ENCODE measurements at regions of chr22 and their contacts with region 1.

Region 1: DNA sequence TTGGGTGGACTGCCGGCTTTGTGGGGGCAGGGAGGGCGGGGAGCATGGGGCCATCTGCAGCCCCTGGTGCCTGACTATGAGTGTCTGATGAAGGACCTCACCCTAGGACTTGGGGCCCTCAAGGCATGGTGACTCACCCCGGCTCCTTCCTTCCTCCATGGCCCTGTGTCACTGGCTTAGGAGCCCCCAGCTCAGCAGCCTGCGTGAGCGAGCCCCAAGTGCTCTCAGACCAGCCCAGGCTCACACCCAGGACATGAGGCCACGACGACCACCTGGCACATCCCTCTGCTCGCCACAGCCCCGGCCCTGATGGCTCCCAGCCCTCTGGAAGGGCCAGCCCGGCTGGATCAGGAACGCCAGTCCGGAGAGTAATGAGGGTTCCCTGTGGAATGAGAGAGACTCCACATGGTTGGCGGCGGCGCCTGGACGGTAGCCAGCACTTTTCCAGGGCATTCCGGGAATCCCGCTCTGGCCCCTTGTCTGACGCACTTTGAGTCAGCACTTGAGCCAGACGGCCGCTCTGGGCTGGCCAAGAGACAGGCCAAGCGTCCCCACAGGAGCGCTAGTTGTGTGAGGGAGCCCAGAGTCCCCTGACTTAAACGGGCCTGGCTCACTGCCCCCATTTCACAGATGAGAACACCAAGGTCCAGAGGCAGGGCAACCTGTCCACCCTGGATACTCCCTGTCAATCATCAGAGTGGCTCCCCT is 50.7 kb upstream of the SHISAL1 start:
- DNase-seq: peak; percentile 87 to 97
- H3K4me3 ChIP-seq: peak overlapping the region in 1 of 2 donors; percentile 23
- H3K27ac ChIP-seq: peak overlapping the region; percentile 70 to 71
- H3K4me1 ChIP-seq: peaks cover 8 to 66% (median 63%) of the 10 kb centered on the region in 4 donors
- H3K27me3 ChIP-seq: no peaks in the 10 kb centered on the region
- CTCF ChIP-seq: no peak

Region 2: DNA sequence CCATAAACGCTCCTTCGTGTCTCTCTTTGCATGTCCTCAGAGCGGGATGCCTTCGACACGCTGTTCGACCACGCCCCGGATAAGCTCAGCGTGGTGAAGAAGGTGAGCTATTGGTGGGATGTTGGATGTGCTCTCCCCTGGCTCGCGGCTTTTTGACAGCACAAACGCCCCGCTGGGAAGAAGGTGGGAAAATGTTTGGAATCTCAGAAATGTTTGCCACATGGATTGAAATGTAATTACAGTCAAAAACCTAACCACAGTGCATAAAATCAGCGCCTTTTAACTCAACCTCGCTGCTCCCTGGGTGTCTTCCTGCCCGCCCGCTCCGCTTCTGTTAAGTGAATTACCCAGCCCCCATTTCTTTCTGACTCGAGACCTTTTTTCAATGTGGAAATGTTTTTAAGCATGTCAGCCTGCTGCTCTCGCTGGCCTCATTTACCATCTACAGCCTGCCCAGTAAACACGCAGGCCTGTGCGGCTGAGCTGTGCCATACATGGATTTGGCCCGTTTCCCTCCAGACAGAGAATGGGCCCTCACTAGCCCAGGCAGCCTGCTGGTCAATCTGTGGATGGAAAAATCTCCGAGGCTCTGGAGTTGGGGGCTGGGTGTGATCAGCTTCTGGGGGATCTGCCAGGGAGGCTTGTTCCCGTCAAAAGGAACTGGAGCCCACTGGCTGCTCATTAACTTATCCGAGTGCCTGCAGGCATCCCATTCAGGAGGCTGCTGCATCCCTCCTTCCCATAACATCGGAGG is 215.4 kb before region 1 on chr22:
- intact Hi-C with region 1: loop called (anchors 5 kb)
- DNase-seq: no peak
- H3K4me3 ChIP-seq: no peak overlapping the region
- H3K27ac ChIP-seq: no peak overlapping the region
- H3K4me1 ChIP-seq: peaks cover 0 to 12% (median 2%) of the 10 kb centered on the region in 4 donors
- H3K27me3 ChIP-seq: peaks cover 0 to 18% of the 10 kb centered on the region in 2 donors
- CTCF ChIP-seq: no peak

Region 3: GRCh38 chr22:44242946-44243724 is 120.3 kb before region 1 on chr22:
- intact Hi-C with region 1: no loop called
- DNase-seq: no peak
- H3K4me3 ChIP-seq: no peak overlapping the region
- H3K27ac ChIP-seq: no peak overlapping the region
- H3K4me1 ChIP-seq: no peaks in the 10 kb centered on the region
- H3K27me3 ChIP-seq: peaks cover 0 to 6% of the 10 kb centered on the region in 2 donors
- CTCF ChIP-seq: no peak

Region 4: DNA sequence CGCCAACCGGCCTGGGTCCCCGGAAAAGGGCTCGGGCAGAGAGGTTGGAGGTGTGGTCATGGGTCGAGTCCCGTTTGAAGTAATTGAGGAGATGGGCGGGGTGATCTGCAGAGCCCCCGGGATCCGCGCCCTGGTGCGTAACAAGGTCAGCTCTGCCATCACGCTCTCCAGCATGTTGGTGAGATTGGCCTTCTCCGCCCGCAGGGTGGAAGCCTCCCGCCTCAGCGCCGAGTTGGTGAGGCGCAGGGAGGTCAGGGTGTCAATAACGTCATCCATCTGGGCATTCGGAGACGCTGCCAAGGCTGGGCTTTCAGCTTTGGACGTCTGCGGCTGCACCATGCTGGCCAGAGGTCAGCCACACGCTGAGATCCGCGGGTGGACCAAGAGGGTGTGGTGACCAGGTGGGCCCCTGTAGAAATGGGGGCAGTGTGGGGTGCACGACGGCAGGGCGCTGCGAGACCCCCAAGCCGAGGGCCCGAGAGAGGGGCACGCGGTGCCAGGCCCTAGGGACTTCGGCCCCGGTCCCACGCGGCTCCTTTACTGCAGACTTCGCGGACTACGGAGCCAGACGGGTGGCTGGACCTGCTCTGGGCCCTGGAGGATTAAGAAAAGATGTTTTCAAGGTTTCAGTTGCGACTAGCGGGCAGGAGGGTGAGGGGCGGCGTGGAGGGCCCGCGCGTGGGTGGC is 133.9 kb after region 1 on chr22:
- intact Hi-C with region 1: loop called (anchors 2 kb)
- DNase-seq: no peak
- H3K4me3 ChIP-seq: peak overlapping the region; percentile 77 to 94
- H3K27ac ChIP-seq: peak overlapping the region; percentile 60 to 75
- H3K4me1 ChIP-seq: peaks cover 0 to 21% (median 9%) of the 10 kb centered on the region in 4 donors
- H3K27me3 ChIP-seq: peaks cover 0 to 2% of the 10 kb centered on the region in 2 donors
- CTCF ChIP-seq: no peak

Measured in tibial artery (tissue), 4 donors.